Activated B cell treated with CpG ODN at 0.5 μM for 24 hours (primary cell): ENCODE measurements at regions of chr7 and their contacts with region 1.

Region 1: DNA sequence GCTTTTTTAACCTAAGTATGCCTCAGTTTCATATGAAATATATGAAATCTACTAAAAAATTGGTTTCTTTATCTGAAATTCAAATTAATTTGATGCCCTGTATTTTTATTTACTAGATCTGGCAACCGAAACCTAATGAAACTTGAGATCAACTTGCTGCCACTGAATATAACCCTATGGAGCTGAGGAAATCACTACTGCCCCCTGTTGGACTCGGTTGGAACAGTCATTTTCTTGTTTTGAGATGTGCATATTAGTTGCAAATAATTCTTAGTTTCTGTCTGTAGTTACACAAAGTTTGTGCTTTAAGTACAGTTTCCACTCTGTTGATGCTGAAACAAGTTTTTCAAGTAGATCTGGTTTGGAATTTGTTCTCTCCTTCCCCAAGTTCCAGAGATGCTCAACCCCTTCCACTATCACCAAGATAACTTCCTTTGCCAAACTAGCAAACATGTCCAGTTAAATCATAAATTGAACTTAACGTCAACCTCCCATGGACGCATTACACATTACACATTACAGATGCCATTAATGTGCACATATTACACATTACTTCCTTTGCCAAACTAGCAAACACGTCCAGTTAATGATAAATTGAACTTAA is 22.2 kb upstream of the EXOC4 start:
- DNase-seq: no peak
- ATAC-seq: no peak
- H3K4me3 Mint-ChIP-seq: no peak overlapping the region
- H3K27ac Mint-ChIP-seq: no peak overlapping the region
- H3K4me1 Mint-ChIP-seq: no peaks in the 10 kb centered on the region
- H3K27me3 Mint-ChIP-seq: peaks cover 16% of the 10 kb centered on the region
- CTCF ChIP-seq: peak; percentile 47

Region 2: DNA sequence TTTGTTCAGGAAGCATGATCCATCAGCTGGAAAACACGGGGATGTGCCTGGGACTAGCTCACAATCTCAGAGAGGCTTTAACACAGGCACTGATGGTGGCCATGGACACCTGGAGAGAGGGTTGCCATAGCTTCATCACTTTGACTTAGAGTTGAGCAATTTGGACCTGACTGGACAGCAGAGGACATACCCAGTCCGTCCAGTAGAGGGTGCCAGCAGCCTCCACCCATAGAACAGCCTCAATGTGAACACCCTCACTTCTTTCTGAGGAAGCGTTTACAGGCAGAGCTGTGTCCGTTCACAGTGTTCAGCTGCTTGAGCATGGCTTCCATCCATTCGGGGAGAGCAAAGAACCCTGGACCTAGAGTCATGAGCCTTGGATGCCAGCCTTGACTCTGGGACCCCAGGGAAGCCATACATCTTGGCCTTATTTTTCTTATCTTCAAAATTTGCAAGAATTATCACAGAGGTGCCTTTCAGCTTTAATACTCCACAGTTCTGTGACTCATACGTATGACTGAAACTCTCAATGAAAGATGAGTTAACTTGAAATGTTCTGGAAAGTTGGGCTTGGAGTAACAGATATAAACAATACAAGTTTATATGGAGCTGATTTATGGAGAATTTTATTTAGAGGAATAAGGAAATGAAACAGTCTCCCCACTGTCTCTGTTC is 1371.4 kb before region 1 on chr7:
- CTCF ChIA-PET with region 1: no interaction called
- POLR2A ChIA-PET with region 1: no interaction called
- intact Hi-C with region 1: loop called (anchors 5 kb)
- DNase-seq: no peak
- ATAC-seq: no peak
- H3K4me3 Mint-ChIP-seq: no peak overlapping the region
- H3K27ac Mint-ChIP-seq: no peak overlapping the region
- H3K4me1 Mint-ChIP-seq: no peaks in the 10 kb centered on the region
- H3K27me3 Mint-ChIP-seq: peaks cover 7% of the 10 kb centered on the region
- CTCF ChIP-seq: no peak

Region 3: DNA sequence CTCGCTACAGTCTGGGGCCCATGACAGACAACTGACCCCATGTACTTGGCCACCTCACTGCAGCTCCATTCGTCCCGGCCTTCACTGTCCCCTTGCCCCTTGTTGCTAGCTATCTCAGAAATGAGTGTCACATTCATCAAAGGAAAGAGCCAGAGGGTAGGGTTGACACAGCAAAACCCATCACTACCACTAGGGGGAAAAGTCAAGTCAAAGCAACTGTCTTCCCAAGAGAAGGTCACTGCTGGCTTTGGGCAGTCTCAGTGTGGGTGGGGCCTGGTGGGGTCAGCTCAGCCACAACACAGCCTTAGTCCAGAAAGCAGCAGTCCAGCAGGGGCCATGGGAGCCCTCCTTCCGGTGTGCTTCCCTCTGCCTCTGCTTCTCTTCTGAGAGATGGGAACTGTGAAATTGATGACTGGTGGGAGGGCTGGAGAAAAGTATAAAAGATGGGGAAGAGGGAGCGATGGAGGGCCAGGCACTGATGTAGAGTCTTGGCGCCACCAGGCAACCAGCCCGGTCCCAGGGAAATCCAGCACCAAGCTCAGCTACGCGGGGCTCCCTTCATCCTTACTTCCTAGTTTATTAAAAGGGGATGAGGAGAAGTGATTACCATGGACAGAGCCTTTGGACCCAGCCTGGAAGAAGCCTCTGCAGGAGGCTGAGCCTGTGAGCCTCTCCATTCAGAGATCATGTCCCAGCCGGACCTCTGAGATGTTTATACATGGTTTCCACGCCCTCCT is 712.4 kb before region 1 on chr7:
- CTCF ChIA-PET with region 1: no interaction called
- POLR2A ChIA-PET with region 1: no interaction called
- intact Hi-C with region 1: loop called (anchors 5 kb)
- DNase-seq: no peak
- ATAC-seq: no peak
- H3K4me3 Mint-ChIP-seq: no peak overlapping the region
- H3K27ac Mint-ChIP-seq: no peak overlapping the region
- H3K4me1 Mint-ChIP-seq: no peaks in the 10 kb centered on the region
- H3K27me3 Mint-ChIP-seq: no peaks in the 10 kb centered on the region
- CTCF ChIP-seq: no peak

Region 4: DNA sequence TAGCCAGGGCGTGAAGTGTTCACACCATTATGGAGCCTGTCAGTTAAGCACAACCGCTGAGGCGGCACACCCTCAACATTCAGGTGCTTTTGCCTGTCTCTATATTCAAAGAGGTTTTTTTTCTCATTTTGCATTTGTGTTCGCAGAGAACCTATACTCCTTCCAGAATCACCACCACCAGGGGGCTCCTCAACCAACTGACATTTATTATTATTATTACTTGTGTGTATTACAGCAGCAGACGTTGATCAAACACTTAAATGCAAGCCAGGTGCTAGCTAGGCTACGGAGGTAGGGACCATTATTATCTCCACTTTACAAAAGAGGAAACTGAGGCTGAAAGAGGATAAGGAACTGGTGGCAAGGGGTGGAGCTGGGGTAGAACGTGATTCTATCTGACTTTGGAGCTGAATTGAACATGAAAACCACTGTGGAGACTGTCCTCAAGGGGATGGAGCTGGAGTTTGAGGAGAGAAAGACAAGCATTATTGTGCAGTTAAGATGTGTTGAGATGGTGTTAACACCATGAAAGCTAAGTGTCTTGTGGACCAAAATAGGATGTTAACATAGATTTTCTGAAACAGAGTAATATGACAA is 520.6 kb before region 1 on chr7:
- CTCF ChIA-PET with region 1: no interaction called
- POLR2A ChIA-PET with region 1: no interaction called
- intact Hi-C with region 1: loop called (anchors 1 kb)
- DNase-seq: no peak
- ATAC-seq: no peak
- H3K4me3 Mint-ChIP-seq: no peak overlapping the region
- H3K27ac Mint-ChIP-seq: no peak overlapping the region
- H3K4me1 Mint-ChIP-seq: no peaks in the 10 kb centered on the region
- H3K27me3 Mint-ChIP-seq: no peaks in the 10 kb centered on the region
- CTCF ChIP-seq: no peak

Region 5: GRCh38 chr7:133676805-133677370 is 446.2 kb after region 1 on chr7:
- CTCF ChIA-PET with region 1: no interaction called
- POLR2A ChIA-PET with region 1: no interaction called
- intact Hi-C with region 1: no loop called
- DNase-seq: no peak
- ATAC-seq: no peak
- H3K4me3 Mint-ChIP-seq: no peak overlapping the region
- H3K27ac Mint-ChIP-seq: no peak overlapping the region
- H3K4me1 Mint-ChIP-seq: no peaks in the 10 kb centered on the region
- H3K27me3 Mint-ChIP-seq: no peaks in the 10 kb centered on the region
- CTCF ChIP-seq: no peak